SK-N-SH (cell line): ENCODE measurements at regions of chr5 and their contacts with region 1.

Region 1: DNA sequence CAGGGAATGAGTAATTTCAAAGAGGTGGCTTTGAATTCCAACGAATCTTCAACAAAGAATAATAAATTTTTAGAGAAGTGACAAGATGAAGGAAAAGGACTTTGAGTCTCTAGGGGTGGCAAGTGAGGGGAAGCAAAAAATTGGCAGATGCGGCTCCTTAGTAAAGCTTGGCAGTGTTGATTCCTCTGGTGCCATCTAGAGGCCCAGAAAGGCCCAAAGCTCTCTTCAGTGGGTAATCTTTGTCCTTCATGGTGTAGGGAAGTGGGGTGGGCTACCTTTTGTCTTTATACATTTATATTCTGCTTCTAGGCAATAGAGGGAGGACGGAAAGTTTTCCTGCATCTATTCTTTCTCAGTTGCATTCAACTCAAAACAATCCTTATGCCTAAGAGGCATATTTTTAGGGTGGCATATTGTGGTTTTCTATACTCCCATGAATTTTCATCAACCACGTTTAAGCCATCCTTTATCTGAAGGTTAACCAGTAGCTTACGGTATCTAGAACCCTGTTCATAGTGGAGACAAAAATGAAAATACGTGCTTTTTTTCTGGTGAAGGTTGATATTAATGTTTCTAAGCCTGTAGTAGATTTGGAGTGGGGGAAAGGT is 17.5 kb upstream of the ROPN1L start:
- DNase-seq: peak; percentile 43
- H3K4me3 ChIP-seq: no peak overlapping the region
- H3K27ac ChIP-seq: no peak overlapping the region; a peak in 1 of 4 replicates
- H3K4me1 ChIP-seq: peaks cover 14 to 23% of the 10 kb centered on the region in 2 experiments; a peak in 3 of 4 replicates
- H3K27me3 ChIP-seq: no peaks in the 10 kb centered on the region
- CTCF ChIP-seq: peak; percentile 70
- EP300 ChIP-seq: no peak
- RAD21 ChIP-seq: peak; percentile 75

Region 2: DNA sequence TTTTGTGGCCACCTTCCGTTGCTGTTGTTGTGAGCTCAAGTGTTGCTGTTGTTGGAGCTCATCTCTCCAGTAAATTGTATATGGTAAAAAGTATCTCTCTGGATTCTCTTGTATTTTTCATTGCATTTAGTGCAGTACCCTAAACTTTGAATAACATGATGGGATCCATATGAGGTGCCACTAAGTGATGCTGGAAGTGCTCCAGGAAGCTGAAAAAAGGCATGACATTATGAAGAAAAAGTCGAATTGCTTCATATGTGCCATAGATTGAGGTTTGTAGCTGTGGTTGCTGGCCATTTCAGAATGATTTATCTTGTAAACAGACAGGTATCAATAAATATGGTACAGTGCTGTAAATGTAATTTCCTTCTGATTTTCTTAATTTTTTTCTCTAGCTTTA is 65.2 kb before region 1 on chr5:
- CTCF ChIA-PET with region 1: interaction called, 11 read pairs
- POLR2A ChIA-PET with region 1: interaction called, 3 read pairs
- DNase-seq: no peak
- H3K4me3 ChIP-seq: no peak overlapping the region
- H3K27ac ChIP-seq: no peak overlapping the region
- H3K4me1 ChIP-seq: peaks cover 0 to 7% of the 10 kb centered on the region in 2 experiments; a peak in 2 of 4 replicates
- H3K27me3 ChIP-seq: no peaks in the 10 kb centered on the region
- CTCF ChIP-seq: no peak
- EP300 ChIP-seq: no peak
- RAD21 ChIP-seq: no peak

Region 3: GRCh38 chr5:10409504-10409903 is 14.7 kb before region 1 on chr5:
- CTCF ChIA-PET with region 1: interaction called, 10 read pairs
- POLR2A ChIA-PET with region 1: no interaction called
- DNase-seq: no peak
- H3K4me3 ChIP-seq: no peak overlapping the region
- H3K27ac ChIP-seq: no peak overlapping the region
- H3K4me1 ChIP-seq: no peaks in the 10 kb centered on the region; a peak in 1 of 4 replicates
- H3K27me3 ChIP-seq: no peaks in the 10 kb centered on the region
- CTCF ChIP-seq: no peak
- EP300 ChIP-seq: no peak
- RAD21 ChIP-seq: no peak

Region 4: DNA sequence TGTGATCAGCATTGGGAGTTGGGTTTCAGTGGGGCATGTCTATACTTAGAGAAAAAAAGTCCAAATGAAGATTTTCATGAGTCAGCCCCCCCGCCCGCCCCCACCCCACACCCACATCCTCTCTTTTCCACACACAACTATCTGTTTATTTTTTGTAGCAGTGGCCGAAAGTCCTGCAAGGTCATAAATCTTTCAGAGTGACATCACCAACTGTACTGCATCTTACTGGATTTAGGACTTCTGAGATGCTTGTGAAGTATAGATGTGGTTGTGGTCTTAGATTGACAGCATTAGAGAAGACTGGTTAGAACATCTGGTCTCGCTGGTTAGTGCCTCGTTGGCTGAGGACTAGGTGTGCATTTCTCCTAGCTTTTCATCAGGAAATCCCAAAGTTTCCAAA is 10.2 kb after region 1 on chr5:
- CTCF ChIA-PET with region 1: interaction called, 10 read pairs
- POLR2A ChIA-PET with region 1: no interaction called
- DNase-seq: no peak
- H3K4me3 ChIP-seq: no peak overlapping the region
- H3K27ac ChIP-seq: no peak overlapping the region
- H3K4me1 ChIP-seq: no peaks in the 10 kb centered on the region
- H3K27me3 ChIP-seq: no peaks in the 10 kb centered on the region
- CTCF ChIP-seq: no peak
- EP300 ChIP-seq: no peak
- RAD21 ChIP-seq: no peak

Region 5: DNA sequence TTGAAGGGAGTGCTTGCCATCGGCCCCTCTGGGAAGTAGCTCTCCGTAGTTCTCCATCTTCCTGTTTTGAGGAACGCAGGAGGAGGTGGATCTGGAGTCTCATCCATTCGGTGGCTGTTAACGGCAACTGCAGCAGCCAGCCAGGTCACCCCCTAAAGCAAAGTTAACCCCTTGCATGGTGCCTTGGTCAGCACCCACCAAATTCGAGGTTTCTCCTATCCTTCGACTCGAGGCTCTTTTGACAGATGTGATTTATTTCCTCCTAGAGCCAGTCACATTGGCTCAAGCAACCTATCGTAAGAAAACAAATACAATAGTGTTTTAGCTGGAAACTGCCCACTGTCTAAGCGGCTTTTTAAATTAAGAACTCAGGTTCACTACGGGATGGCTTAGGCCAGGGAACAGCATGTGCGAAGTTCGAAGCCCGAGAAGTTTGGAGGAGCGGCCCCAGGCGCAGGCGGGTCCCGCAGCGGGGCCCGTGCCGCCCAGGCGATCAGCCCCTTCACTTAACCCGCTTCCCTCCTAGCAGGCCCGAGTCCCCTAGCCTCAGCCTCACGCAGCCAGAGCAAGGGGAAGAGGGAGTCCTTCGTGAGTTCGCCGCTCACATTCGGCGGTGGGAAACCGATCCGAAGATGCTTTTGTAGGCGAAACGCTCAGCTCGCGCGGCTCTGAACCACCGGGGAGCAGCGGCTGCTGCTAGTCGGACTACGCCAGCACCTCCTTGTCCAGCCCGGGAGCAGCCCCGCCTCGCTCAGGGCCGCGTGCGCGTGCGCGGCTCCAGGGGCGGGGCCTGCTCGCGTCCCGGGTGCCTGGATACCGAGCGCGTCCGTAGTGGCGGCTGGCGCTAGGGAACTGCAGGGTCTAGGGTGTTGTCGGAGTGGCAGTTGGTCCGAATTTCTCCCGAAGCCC is 17.1 kb after region 1 on chr5 and contains the start of gene ROPN1L:
- CTCF ChIA-PET with region 1: interaction called, 13 read pairs
- POLR2A ChIA-PET with region 1: interaction called, 3 read pairs
- DNase-seq: peak; percentile 99
- H3K4me3 ChIP-seq: peak within 1 kb of the TSS; percentile 63 to 72
- H3K27ac ChIP-seq: peak within 1 kb of the TSS; percentile 70 to 84
- H3K4me1 ChIP-seq: peaks cover 0 to 8% of the 10 kb centered on the region in 2 experiments; a peak in 1 of 4 replicates
- H3K27me3 ChIP-seq: no peaks in the 10 kb centered on the region
- CTCF ChIP-seq: no peak
- EP300 ChIP-seq: no peak
- RAD21 ChIP-seq: no peak
- polyA plus RNA-seq, gene ROPN1L: 0.31 and 0.58 TPM in 2 replicates

Region 6: DNA sequence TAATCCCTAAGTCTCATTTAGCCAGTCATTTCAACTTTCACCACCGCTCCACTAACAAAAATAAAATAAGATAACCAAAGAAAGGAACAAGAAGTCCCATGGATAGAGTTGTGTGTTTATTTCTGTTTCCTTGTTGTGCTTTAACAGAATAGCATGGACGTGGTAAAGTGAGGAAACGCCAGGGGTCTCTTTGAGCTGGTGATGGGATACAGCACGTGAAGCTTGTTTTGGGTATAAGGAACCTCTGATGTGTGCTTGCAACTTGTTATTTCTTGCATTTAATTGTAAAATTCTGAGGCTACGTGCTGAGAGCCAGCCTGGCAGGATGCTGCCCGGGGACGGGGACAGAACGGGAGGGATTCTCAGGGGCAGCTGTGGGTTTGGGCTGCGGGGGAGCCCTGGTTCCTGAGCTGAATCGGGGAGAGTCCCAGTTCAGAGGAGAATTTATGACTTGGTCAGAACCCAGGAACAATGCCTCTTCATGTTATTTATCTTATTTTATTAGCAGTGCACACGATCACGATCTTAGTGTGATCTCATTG is 203.0 kb after region 1 on chr5:
- CTCF ChIA-PET with region 1: interaction called, 10 read pairs
- POLR2A ChIA-PET with region 1: no interaction called
- DNase-seq: peak; percentile 64
- H3K4me3 ChIP-seq: peak overlapping the region; percentile 39 to 43
- H3K27ac ChIP-seq: peak overlapping the region; percentile 28 to 63; a peak in 2 of 4 replicates
- H3K4me1 ChIP-seq: peaks cover 0 to 7% of the 10 kb centered on the region in 2 experiments; a peak in 2 of 4 replicates
- H3K27me3 ChIP-seq: no peaks in the 10 kb centered on the region
- CTCF ChIP-seq: no peak
- EP300 ChIP-seq: no peak
- RAD21 ChIP-seq: no peak